CD14-positive monocyte (primary cell): ENCODE measurements at regions of chr4 and their contacts with region 1.

Region 1: DNA sequence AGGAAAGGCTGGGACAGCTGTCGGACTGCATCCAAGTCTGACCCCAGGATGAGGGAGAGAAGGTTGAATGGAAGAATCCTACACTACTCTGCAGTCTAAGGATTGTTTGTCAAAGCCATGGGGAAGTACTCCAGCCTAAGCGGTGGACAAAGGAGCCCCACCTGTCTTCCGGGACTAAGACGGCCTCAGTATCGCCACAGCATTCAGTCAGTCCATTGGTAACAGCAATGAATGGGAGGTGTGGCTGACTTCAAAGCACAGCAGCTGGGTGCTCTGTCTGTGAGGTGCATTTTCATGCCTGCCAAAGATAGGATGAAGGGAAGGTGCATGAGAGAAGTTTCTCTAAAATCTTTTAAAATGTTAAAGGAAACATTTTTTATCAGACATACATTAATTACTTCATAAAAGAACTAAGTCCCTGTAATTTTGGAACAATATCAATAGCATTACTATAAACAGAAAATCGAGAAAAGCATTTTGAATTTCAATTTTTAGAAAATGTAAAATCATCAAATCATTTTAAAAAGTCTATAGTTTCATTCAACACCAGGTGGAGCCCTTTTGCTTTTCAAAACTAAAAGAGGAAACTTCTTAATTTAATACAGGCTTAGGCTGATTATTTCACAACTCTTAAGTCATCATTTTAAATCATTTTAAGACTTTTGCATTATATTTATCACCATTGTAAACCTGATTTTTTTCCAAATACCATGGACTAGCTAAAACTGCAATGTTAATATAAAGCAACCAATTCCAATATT is 27.6 kb upstream of the INTU start:
- DNase-seq: peak; percentile 12 to 46 (median 45)
- H3K4me3 ChIP-seq: no peak overlapping the region
- H3K4me3 Mint-ChIP-seq: no peak overlapping the region
- H3K27ac ChIP-seq: no peak overlapping the region
- H3K27ac Mint-ChIP-seq: no peak overlapping the region
- H3K4me1 ChIP-seq: no peaks in the 10 kb centered on the region
- H3K4me1 Mint-ChIP-seq: no peaks in the 10 kb centered on the region
- H3K27me3 ChIP-seq: peaks cover 0 to 4% of the 10 kb centered on the region in 2 donors
- H3K27me3 Mint-ChIP-seq: peaks cover 9 to 10% (median 10%) of the 10 kb centered on the region in 3 donors
- CTCF ChIP-seq: peak; percentile 73

Region 2: GRCh38 chr4:127732613-127733328 is 127.6 kb after region 1 on chr4:
- intact Hi-C with region 1: loop called (anchors 5 kb)
- DNase-seq: peak in 2 of 3 donors; percentile 13 to 21
- H3K4me3 ChIP-seq: no peak overlapping the region
- H3K4me3 Mint-ChIP-seq: no peak overlapping the region
- H3K27ac ChIP-seq: no peak overlapping the region
- H3K27ac Mint-ChIP-seq: no peak overlapping the region
- H3K4me1 ChIP-seq: no peaks in the 10 kb centered on the region
- H3K4me1 Mint-ChIP-seq: no peaks in the 10 kb centered on the region
- H3K27me3 ChIP-seq: no peaks in the 10 kb centered on the region
- H3K27me3 Mint-ChIP-seq: peaks cover 2% of the 10 kb centered on the region in 3 donors
- CTCF ChIP-seq: peak; percentile 62